ENCODE measurements at regions of chr6 and their contacts with region 1.

Region 1: DNA sequence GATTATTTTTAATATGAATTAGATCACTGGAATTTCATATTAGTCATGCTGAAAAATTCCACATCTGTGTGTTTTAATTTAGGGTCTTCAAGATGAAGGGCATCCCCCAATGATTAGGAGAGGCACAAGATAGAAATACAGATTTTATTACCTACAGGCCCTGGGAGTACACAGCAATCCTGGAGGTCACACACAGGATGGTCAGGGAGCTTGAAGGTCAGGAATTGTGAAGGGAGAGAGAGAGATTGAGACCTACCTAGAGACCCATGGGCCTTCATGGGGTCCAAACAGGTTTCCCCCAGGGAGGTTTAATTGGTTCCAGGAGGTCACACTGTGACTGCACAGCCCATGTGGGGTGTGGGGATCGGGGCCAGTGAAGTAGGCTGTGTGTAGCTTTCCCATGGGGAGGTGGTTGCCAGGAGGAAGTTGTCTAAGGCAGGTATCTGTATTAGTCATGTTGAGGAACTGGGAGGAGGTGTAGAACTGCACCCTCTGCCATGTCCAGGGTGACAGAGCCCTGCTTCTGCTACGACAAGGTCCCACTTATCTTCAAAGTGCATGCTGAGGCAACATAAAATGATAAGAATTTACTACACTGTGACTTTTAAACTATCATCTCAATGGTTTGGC is 18.3 kb downstream of the SNX9 start:
- DNase-seq: no peak
- H3K4me3 ChIP-seq: no peak overlapping the region
- H3K27ac ChIP-seq: no peak overlapping the region
- H3K4me1 ChIP-seq: peaks cover 0 to 69% (median 61%) of the 10 kb centered on the region in 4 donors
- H3K27me3 ChIP-seq: no peaks in the 10 kb centered on the region
- CTCF ChIP-seq: no peak
- EP300 ChIP-seq: no peak
- POLR2A ChIP-seq: no peak

Region 2: DNA sequence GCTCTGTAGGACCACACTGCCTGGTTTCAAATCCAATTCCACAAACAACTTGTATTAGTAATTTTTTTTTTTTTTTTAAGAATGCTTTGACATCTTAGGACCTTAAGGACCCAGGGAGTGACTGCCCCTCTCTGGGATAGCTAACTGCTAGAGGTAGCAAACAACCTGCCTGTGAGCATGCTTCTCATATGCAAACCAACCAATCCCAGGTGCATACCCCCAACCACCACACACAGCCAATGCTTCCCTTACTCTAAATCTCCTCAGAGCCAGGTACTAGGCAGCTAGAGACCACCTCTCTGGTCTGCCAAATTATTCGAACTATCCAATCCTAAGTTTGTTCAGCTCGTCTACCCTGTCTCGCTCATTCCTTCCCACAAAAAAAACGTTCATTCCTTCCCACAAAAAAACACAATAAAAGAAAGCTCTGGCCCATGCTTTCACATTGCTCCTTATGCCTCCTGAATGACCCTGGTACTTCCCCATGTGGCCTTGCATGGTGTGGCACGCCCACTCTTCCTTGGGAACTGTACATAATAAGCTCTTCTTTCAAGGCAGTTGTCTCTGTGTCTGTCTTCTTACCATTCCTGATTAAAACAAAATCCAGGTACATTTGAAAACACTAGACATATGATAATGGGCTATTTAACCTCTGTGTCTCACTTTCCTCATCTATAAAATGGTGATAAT is 320.4 kb after region 1 on chr6:
- intact Hi-C with region 1: loop called (anchors 5 kb)
- DNase-seq: no peak
- H3K4me3 ChIP-seq: no peak overlapping the region
- H3K27ac ChIP-seq: peak overlapping the region in 1 of 4 donors; percentile 51
- H3K4me1 ChIP-seq: peaks cover 0 to 17% (median 5%) of the 10 kb centered on the region in 4 donors
- H3K27me3 ChIP-seq: no peaks in the 10 kb centered on the region
- CTCF ChIP-seq: no peak
- EP300 ChIP-seq: no peak
- POLR2A ChIP-seq: no peak

Measured in sigmoid colon (tissue), 7 donors.